Activated T-helper 1 cell treated with anti-CD3 and anti-CD28 coated beads, Interleukin-12 subunit alpha, Interleukin-12 subunit beta, Interleukin-2, Interleukin-4 antibody, amounts not matched to agents 30 ng/mL and 10 ng/mL and 1 ng/mL, durations not matched to agents 14 hours and 24 hours and 36 hours (primary cell): ENCODE measurements at regions of chr15 and their contacts with region 1.

Region 1: GRCh38 chr15:56052395-56053045 is 59.1 kb upstream of the NEDD4 start:
- DNase-seq: no peak
- H3K4me3 Mint-ChIP-seq: no peak overlapping the region
- H3K27ac Mint-ChIP-seq: no peak overlapping the region
- H3K4me1 Mint-ChIP-seq: peaks cover 6% of the 10 kb centered on the region
- H3K27me3 Mint-ChIP-seq: peaks cover 5% of the 10 kb centered on the region

Region 2: GRCh38 chr15:55649054-55649423 is 403.5 kb before region 1 on chr15:
- intact Hi-C with region 1: loop called (anchors 1 kb)
- DNase-seq: no peak
- H3K4me3 Mint-ChIP-seq: no peak overlapping the region
- H3K27ac Mint-ChIP-seq: no peak overlapping the region
- H3K4me1 Mint-ChIP-seq: no peaks in the 10 kb centered on the region
- H3K27me3 Mint-ChIP-seq: peaks cover 7% of the 10 kb centered on the region

Region 3: GRCh38 chr15:55789066-55789660 is 263.4 kb before region 1 on chr15:
- intact Hi-C with region 1: loop called (anchors 2 kb)
- DNase-seq: peak; percentile 23
- H3K4me3 Mint-ChIP-seq: no peak overlapping the region
- H3K27ac Mint-ChIP-seq: no peak overlapping the region
- H3K4me1 Mint-ChIP-seq: no peaks in the 10 kb centered on the region
- H3K27me3 Mint-ChIP-seq: peaks cover 3% of the 10 kb centered on the region

Region 4: DNA sequence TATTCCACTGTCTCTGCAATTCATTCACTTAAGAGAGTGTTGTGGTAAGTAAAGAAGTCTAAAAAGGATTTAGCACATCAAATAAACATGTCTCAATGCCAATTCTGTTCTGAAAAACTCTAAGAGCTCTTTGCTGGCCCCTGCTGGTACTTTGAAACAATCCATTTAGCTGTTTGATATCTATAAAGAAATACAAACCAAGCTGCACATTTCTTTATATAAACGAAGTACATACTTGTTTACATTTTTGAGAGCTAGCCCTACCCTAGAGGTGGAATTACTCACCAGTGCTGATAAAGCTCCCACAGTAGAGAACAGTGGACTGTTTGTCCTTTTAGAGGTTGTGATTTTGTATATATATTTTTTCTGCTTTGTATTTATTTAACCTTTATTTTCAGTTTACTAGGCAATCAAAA is 134.6 kb before region 1 on chr15:
- intact Hi-C with region 1: loop called (anchors 5 kb)
- DNase-seq: no peak
- H3K4me3 Mint-ChIP-seq: no peak overlapping the region
- H3K27ac Mint-ChIP-seq: no peak overlapping the region
- H3K4me1 Mint-ChIP-seq: peaks cover 6% of the 10 kb centered on the region
- H3K27me3 Mint-ChIP-seq: no peaks in the 10 kb centered on the region

Region 5: GRCh38 chr15:55993111-55993803 is 59.3 kb before region 1 on chr15 and contains the start of gene NEDD4:
- intact Hi-C with region 1: loop called (anchors 2 kb)
- DNase-seq: peak; percentile 68
- H3K4me3 Mint-ChIP-seq: peak within 1 kb of the TSS; percentile 87
- H3K27ac Mint-ChIP-seq: peak within 1 kb of the TSS; percentile 57
- H3K4me1 Mint-ChIP-seq: peaks cover 23% of the 10 kb centered on the region
- H3K27me3 Mint-ChIP-seq: peaks cover 30% of the 10 kb centered on the region
- total RNA-seq, gene NEDD4: 10.4 and 12.6 TPM in 2 replicates

Region 6: GRCh38 chr15:56016281-56016680 is 36.2 kb before region 1 on chr15:
- intact Hi-C with region 1: no loop called
- DNase-seq: no peak
- H3K4me3 Mint-ChIP-seq: no peak overlapping the region
- H3K27ac Mint-ChIP-seq: no peak overlapping the region
- H3K4me1 Mint-ChIP-seq: no peaks in the 10 kb centered on the region
- H3K27me3 Mint-ChIP-seq: peaks cover 7% of the 10 kb centered on the region

Region 7: GRCh38 chr15:56076640-56077039 is 24.1 kb after region 1 on chr15:
- intact Hi-C with region 1: no loop called
- DNase-seq: no peak
- H3K4me3 Mint-ChIP-seq: no peak overlapping the region
- H3K27ac Mint-ChIP-seq: no peak overlapping the region
- H3K4me1 Mint-ChIP-seq: peaks cover 2% of the 10 kb centered on the region
- H3K27me3 Mint-ChIP-seq: peaks cover 7% of the 10 kb centered on the region

Region 8: DNA sequence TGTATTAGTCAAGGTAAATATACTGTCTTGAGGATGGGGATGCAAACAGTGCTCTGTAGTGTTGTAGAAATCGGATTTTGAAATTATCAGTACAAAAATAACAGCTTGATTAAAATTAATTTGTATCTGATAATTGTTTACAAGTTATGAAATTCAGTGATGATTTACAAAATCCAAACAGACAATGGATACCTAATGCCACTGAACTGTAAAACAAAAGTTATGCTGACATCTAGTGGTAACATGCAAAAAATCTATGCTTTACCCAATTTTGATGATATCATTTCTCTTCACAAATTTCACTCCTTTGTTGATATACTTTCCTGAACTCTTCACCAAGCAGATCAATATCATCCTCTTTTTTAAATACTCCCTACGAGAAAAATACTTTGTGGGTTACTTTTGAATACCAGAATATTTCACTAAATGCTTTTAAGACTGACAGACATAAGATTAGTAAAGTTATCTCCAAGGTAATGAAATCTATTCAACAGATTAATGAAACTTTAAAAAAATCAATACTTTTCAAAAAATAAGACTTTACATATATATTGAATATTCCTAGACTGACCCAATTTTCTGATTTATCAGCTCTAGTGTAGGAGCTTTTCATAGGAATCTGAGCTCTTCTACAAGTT is 376.4 kb after region 1 on chr15:
- intact Hi-C with region 1: loop called (anchors 5 kb)
- DNase-seq: no peak
- H3K4me3 Mint-ChIP-seq: no peak overlapping the region
- H3K27ac Mint-ChIP-seq: no peak overlapping the region
- H3K4me1 Mint-ChIP-seq: no peaks in the 10 kb centered on the region
- H3K27me3 Mint-ChIP-seq: no peaks in the 10 kb centered on the region